Motor neuron (in vitro differentiated cells): ENCODE measurements at regions of chr17 and their contacts with region 1.

Region 1: DNA sequence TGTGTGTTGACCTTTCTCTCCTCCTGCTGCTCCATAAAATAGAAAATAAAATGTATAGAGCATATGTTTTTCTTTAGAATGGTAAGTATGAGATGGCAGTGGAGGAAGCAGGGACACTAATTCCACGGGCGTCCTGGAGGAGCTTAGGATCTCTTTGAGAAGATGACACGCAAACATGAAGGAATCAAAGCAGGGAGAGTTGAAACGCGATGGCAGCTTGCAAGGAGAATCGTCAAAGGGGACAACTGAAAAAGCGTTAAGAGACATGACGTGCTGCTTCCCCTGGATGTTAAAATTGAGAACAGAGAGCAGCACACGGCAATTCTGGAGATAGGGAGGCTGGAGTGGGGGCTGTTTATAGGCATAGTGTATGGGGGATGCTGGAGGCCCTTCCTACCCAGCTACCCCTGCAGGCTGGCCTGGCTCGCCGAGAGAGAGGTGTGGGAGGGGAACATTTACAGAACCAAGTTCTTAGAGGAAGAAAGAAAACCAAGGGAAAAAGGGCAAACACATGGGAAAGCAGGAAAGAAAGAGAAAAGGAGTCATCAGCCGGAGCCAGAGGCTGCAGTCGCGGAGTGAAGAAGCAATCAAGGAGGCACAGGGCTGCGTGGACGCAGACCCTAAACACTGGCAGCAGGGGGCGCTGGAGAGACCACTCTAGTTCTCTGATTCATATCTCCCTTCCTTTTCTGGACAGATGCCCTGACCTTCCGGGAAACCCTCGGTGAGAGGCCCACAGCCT is 55.8 kb downstream of the MYH13 start:
- ATAC-seq: peak in 5 of 8 experiments; percentile 36 to 87 (median 69)
- H3K4me3 ChIP-seq: no peak overlapping the region
- H3K27ac ChIP-seq: no peak overlapping the region
- H3K4me1 ChIP-seq: no peaks in the 10 kb centered on the region

Region 2: GRCh38 chr17:9924735-9925191 is 392.2 kb before region 1 on chr17:
- in situ Hi-C with region 1: loop called in 1 of 9 experiments (anchors 25 kb)
- ATAC-seq: peak; percentile 73 to 91 (median 84)
- H3K4me3 ChIP-seq: no peak overlapping the region
- H3K27ac ChIP-seq: no peak overlapping the region
- H3K4me1 ChIP-seq: peaks cover 3 to 7% of the 10 kb centered on the region in 2 donors

Region 3: DNA sequence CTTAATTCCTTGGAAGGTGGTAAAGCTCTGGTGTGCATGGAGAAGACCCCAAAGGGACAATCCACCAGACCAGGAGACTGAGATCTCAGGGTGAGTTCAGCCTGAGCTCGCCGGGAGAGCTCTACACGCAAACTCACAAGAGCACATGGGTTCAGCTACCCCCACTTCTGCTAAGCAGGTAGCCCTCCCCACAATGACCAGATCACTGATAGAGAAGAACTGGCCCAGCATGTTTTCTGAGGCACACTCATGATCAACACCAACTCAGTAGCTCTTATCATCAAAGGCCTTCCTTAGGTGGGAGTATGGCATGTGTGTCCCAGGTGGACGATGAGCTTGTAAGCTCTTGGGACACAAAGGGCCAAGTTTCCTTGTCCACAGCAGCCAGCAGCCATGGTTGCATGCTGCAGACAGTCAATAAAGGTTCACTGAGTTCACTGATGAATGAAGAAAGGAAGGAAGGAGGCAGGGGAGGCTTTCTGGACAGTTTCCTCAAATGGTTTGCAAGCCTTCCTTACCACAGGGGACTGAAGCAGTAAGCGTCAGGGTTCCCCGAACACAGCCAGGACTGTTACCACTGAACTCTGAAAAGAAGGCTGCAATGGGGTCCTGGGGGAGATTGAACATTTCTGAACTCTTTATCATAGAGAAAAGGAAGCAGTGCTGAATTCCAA is 229.8 kb before region 1 on chr17:
- in situ Hi-C with region 1: no loop called
- ATAC-seq: no peak
- H3K4me3 ChIP-seq: no peak overlapping the region
- H3K27ac ChIP-seq: no peak overlapping the region
- H3K4me1 ChIP-seq: peaks cover 18 to 28% of the 10 kb centered on the region in 2 donors